Aorta (tissue), 5 donors: ENCODE measurements at regions of chr12 and their contacts with region 1.

Region 1: GRCh38 chr12:132489602-132490239 is at the start of gene FBRSL1:
- DNase-seq: peak; percentile 92 to 97
- ATAC-seq: peak; percentile 92
- H3K4me3 ChIP-seq: peak within 1 kb of the TSS; percentile 81 to 85
- H3K27ac ChIP-seq: no peak within 1 kb of the TSS
- H3K4me1 ChIP-seq: peaks cover 0 to 2% of the 10 kb centered on the region in 2 donors
- H3K27me3 ChIP-seq: no peaks in the 10 kb centered on the region
- total RNA-seq, gene FBRSL1: 49.0 to 51.0 TPM

Region 2: GRCh38 chr12:132593521-132594358 is 104.0 kb after region 1 on chr12:
- intact Hi-C with region 1: loop called in 1 of 2 experiments (anchors 10 kb)
- DNase-seq: peak; percentile 92
- ATAC-seq: peak; percentile 92
- H3K4me3 ChIP-seq: no peak overlapping the region
- H3K27ac ChIP-seq: no peak overlapping the region
- H3K4me1 ChIP-seq: no peaks in the 10 kb centered on the region
- H3K27me3 ChIP-seq: no peaks in the 10 kb centered on the region